ENCODE measurements at regions of chr3 and their contacts with region 1.

Region 1: GRCh38 chr3:63228087-63229023 is 49.8 kb upstream of the SYNPR start:
- DNase-seq: peak; percentile 12
- ATAC-seq: peak; percentile 35; the same call in 1 of the 2 replicates
- H3K4me3 ChIP-seq: no peak overlapping the region
- H3K27ac ChIP-seq: no peak overlapping the region
- H3K4me1 ChIP-seq: no peaks in the 10 kb centered on the region
- H3K27me3 ChIP-seq: no peaks in the 10 kb centered on the region
- CTCF ChIP-seq: peak; percentile 49
- POLR2A ChIP-seq: no peak
- RAD21 ChIP-seq: peak; percentile 33; the same call in 1 of the 2 replicates

Region 2: DNA sequence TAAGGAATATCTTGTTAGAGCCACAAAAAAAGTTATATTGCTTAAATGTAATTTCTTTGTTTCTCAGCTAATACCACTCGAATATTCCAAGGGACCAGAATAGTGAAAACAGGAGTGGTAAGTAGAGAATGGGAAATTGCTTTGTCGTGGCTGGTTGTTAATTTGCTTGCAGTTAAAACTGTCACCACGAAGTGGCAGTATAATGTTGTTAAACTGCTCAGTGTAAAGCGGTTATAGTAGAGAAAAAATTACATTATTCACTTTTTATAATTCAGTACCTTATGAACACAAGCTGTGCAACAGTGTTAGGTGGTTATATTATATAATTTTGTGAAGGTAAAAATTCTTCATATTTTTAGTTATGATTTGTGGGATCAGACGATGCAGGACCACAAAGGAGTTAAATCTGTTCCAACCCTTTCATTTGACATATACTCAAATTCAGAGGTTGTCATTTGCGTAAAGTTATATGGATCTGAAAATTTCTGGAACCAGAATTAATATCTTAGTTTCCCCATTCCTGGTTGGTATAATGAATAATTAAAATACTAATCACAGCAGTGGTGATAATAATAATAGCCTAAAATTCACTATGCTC is 1026.8 kb before region 1 on chr3:
- CTCF ChIA-PET with region 1: no interaction called
- POLR2A ChIA-PET with region 1: no interaction called
- dilution Hi-C with region 1: no loop called
- in situ Hi-C with region 1: loop called (anchors 25 kb)
- intact Hi-C with region 1: no loop called
- DNase-seq: peak; percentile 51
- ATAC-seq: peak; percentile 94
- H3K4me3 ChIP-seq: no peak overlapping the region
- H3K27ac ChIP-seq: no peak overlapping the region
- H3K4me1 ChIP-seq: no peaks in the 10 kb centered on the region
- H3K27me3 ChIP-seq: no peaks in the 10 kb centered on the region
- CTCF ChIP-seq: peak; percentile 60
- POLR2A ChIP-seq: no peak
- RAD21 ChIP-seq: peak; percentile 52

Region 3: GRCh38 chr3:62332835-62333244 is 895.5 kb before region 1 on chr3:
- CTCF ChIA-PET with region 1: no interaction called
- POLR2A ChIA-PET with region 1: no interaction called
- dilution Hi-C with region 1: no loop called
- in situ Hi-C with region 1: no loop called
- intact Hi-C with region 1: loop called (anchors 10 kb)
- DNase-seq: peak; percentile 23
- ATAC-seq: no peak
- H3K4me3 ChIP-seq: no peak overlapping the region
- H3K27ac ChIP-seq: no peak overlapping the region
- H3K4me1 ChIP-seq: no peaks in the 10 kb centered on the region
- H3K27me3 ChIP-seq: no peaks in the 10 kb centered on the region
- CTCF ChIP-seq: peak; percentile 54
- POLR2A ChIP-seq: no peak
- RAD21 ChIP-seq: 0 out of 2 replicates have a peak, but pooled peaks have one; percentile 12

Region 4: DNA sequence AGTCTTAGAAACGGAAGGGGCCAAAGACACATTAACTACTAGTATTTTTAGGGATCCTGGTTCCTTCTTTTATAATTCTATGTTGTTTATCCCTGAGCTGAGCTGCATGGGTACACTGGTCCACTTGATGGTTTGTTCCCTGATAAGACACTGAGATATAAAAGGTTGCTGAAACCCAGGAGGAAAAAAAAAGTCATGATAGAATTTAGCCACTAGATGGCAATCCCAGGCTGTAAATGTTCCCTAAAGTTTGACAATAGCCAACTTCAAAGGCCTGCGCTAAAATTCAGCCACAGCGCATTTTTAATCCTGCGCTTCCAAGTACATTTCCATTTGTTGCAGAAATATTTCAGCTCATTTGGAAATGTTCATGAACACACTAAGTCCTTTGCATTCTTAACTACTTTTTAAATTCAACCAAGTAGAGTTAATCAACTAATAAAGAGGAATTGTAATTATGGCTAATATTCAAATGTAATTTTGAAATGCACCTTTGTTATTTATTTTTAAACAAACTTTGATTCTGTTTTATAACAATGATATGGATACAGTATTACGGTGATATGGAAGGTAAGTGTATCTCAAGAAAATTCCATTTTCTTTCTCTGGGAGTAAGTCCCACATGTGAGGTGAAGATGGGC is 605.7 kb before region 1 on chr3:
- CTCF ChIA-PET with region 1: interaction called, 3 read pairs
- POLR2A ChIA-PET with region 1: no interaction called
- dilution Hi-C with region 1: no loop called
- in situ Hi-C with region 1: loop called (anchors 5 kb)
- intact Hi-C with region 1: loop called (anchors 1 kb)
- DNase-seq: peak; percentile 61
- ATAC-seq: peak; percentile 71
- H3K4me3 ChIP-seq: no peak overlapping the region
- H3K27ac ChIP-seq: no peak overlapping the region
- H3K4me1 ChIP-seq: no peaks in the 10 kb centered on the region
- H3K27me3 ChIP-seq: peaks cover 14% of the 10 kb centered on the region
- CTCF ChIP-seq: peak; percentile 77
- POLR2A ChIP-seq: no peak
- RAD21 ChIP-seq: peak; percentile 72

Region 5: DNA sequence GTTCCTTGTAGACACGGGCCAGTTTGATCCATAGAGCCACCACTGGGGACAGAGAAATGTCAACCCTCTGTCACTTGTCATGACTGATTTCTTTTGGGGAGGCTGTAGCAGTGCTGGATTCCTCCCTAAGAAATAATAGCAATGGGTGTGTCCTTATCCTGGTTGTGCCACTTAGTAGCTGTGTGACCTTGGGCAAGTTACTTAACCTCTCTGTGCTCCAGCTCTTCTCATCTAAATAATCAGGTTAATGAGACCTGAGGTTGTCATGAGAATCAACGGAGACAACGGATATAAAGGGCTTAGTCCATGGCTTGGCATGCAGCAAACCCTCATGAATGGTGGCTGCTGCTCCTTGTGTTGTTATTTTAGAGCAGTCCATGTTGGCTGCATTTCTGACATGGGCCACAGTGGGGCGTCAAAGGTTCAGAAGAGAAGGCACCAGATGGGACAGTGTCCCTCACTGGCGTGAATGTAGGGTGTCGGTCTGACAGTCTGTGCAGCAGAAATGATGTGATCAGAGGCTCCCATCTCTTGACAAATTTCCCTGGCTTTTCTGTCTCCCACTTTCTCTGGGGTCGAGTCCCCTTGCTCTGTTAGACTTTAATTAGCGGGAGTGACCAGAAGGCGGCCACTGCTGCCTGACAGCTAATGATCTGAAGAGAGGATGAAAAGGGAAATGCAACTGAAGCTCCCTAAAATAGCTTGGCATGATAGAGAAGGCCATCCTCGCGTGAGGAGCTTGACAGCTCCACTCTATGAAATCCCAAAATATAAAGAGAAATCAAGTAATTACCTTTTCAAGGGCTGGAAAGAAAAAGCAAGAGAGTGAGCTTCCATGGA is 562.5 kb before region 1 on chr3:
- CTCF ChIA-PET with region 1: no interaction called
- POLR2A ChIA-PET with region 1: no interaction called
- dilution Hi-C with region 1: no loop called
- in situ Hi-C with region 1: no loop called
- intact Hi-C with region 1: loop called (anchors 5 kb)
- DNase-seq: peak; percentile 18
- ATAC-seq: peak; percentile 76
- H3K4me3 ChIP-seq: no peak overlapping the region
- H3K27ac ChIP-seq: no peak overlapping the region
- H3K4me1 ChIP-seq: no peaks in the 10 kb centered on the region
- H3K27me3 ChIP-seq: peaks cover 1% of the 10 kb centered on the region
- CTCF ChIP-seq: peak; percentile 39
- POLR2A ChIP-seq: no peak
- RAD21 ChIP-seq: peak; percentile 54

Region 6: GRCh38 chr3:63349583-63350521 is 121.5 kb after region 1 on chr3:
- CTCF ChIA-PET with region 1: no interaction called
- POLR2A ChIA-PET with region 1: no interaction called
- dilution Hi-C with region 1: no loop called
- in situ Hi-C with region 1: loop called (anchors 25 kb)
- intact Hi-C with region 1: no loop called
- DNase-seq: peak; percentile 65
- ATAC-seq: peak; percentile 85
- H3K4me3 ChIP-seq: no peak overlapping the region
- H3K27ac ChIP-seq: no peak overlapping the region
- H3K4me1 ChIP-seq: no peaks in the 10 kb centered on the region
- H3K27me3 ChIP-seq: peaks cover 2% of the 10 kb centered on the region; the same call in 1 of the 2 replicates
- CTCF ChIP-seq: peak; percentile 83
- POLR2A ChIP-seq: no peak
- RAD21 ChIP-seq: peak; percentile 71

Region 7: DNA sequence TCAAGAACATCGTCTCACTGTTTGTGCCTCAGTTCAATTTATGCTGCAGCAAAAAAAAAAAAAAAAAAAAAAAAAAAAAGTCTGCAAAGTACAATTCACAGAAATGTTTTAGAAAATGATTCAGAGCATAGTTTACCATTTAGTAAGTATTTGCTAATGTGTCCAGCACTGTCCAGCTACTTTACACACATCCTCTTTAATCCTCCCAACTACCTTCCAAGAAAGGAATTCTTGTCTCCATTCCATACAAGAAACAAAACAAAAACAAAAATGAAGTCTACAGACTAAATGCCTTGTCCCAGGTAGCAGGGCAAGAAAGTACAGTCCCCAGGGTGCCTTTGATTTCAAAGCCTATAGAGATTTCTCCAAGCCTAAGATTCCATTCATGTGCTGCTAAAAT is 385.2 kb after region 1 on chr3:
- CTCF ChIA-PET with region 1: no interaction called
- POLR2A ChIA-PET with region 1: no interaction called
- dilution Hi-C with region 1: no loop called
- in situ Hi-C with region 1: no loop called
- intact Hi-C with region 1: no loop called
- DNase-seq: peak; percentile 39
- ATAC-seq: no peak
- H3K4me3 ChIP-seq: no peak overlapping the region
- H3K27ac ChIP-seq: no peak overlapping the region
- H3K4me1 ChIP-seq: no peaks in the 10 kb centered on the region
- H3K27me3 ChIP-seq: no peaks in the 10 kb centered on the region; the same call in 1 of the 2 replicates
- CTCF ChIP-seq: no peak
- POLR2A ChIP-seq: no peak
- RAD21 ChIP-seq: no peak

Region 8: GRCh38 chr3:64073158-64073761 is 844.9 kb after region 1 on chr3:
- CTCF ChIA-PET with region 1: no interaction called
- POLR2A ChIA-PET with region 1: no interaction called
- dilution Hi-C with region 1: no loop called
- in situ Hi-C with region 1: no loop called
- intact Hi-C with region 1: no loop called
- DNase-seq: peak; percentile 8
- ATAC-seq: peak; percentile 35; the same call in 1 of the 2 replicates
- H3K4me3 ChIP-seq: no peak overlapping the region
- H3K27ac ChIP-seq: no peak overlapping the region; the same call in 1 of the 2 replicates
- H3K4me1 ChIP-seq: peaks cover 3% of the 10 kb centered on the region; the same call in 1 of the 2 replicates
- H3K27me3 ChIP-seq: no peaks in the 10 kb centered on the region; the same call in 1 of the 2 replicates
- CTCF ChIP-seq: no peak
- POLR2A ChIP-seq: no peak
- RAD21 ChIP-seq: no peak